Endothelial cell of umbilical vein (primary cell): ENCODE measurements at regions of chr5 and their contacts with region 1.

Region 1: GRCh38 chr5:179806250-179807222 is at the start of gene MGAT4B:
- DNase-seq: peak; percentile 68
- H3K4me3 ChIP-seq: peak within 1 kb of the TSS; percentile 55 to 90 (median 82)
- H3K27ac ChIP-seq: peak within 1 kb of the TSS; percentile 67
- H3K4me1 ChIP-seq: peaks cover 23% of the 10 kb centered on the region
- H3K27me3 ChIP-seq: no peaks in the 10 kb centered on the region
- CTCF ChIP-seq: no peak
- POLR2A ChIP-seq: peak; percentile 70
- total RNA-seq, gene MGAT4B: 226 and 243 TPM in 2 replicates

Region 2: GRCh38 chr5:179795863-179796833 is 10.4 kb before region 1 on chr5:
- CTCF ChIA-PET with region 1: interaction called, 4 read pairs
- POLR2A ChIA-PET with region 1: interaction called, 6 read pairs
- dilution Hi-C with region 1: no loop called
- intact Hi-C with region 1: loop called (anchors 1 kb)
- DNase-seq: peak; percentile 78
- H3K4me3 ChIP-seq: peak overlapping the region; percentile 14 to 57 (median 38)
- H3K27ac ChIP-seq: no peak overlapping the region
- H3K4me1 ChIP-seq: peaks cover 10% of the 10 kb centered on the region
- H3K27me3 ChIP-seq: no peaks in the 10 kb centered on the region
- CTCF ChIP-seq: peak; percentile 70 to 83
- POLR2A ChIP-seq: peak; percentile 61

Region 3: DNA sequence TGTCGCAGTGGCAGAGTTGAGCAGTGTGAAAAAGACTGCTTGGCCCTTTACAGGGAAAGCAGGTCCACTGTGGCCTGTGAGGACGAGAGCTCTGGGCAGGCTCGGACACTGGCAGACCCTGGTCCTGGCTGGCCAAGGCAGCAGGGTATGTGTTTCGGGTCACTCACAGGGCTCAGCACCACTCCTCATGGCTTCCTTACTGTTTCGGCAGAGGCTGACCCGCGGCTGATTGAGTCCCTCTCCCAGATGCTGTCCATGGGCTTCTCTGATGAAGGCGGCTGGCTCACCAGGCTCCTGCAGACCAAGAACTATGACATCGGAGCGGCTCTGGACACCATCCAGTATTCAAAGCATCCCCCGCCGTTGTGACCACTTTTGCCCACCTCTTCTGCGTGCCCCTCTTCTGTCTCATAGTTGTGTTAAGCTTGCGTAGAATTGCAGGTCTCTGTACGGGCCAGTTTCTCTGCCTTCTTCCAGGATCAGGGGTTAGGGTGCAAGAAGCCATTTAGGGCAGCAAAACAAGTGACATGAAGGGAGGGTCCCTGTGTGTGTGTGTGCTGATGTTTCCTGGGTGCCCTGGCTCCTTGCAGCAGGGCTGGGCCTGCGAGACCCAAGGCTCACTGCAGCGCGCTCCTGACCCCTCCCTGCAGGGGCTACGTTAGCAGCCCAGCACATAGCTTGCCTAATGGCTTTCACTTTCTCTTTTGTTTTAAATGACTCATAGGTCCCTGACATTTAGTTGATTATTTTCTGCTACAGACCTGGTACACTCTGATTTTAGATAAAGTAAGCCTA is 29.9 kb after region 1 on chr5:
- CTCF ChIA-PET with region 1: interaction called, 12 read pairs
- POLR2A ChIA-PET with region 1: no interaction called
- dilution Hi-C with region 1: no loop called
- intact Hi-C with region 1: no loop called
- DNase-seq: no peak
- H3K4me3 ChIP-seq: no peak overlapping the region
- H3K27ac ChIP-seq: no peak overlapping the region
- H3K4me1 ChIP-seq: no peaks in the 10 kb centered on the region
- H3K27me3 ChIP-seq: no peaks in the 10 kb centered on the region
- CTCF ChIP-seq: no peak
- POLR2A ChIP-seq: no peak

Region 4: DNA sequence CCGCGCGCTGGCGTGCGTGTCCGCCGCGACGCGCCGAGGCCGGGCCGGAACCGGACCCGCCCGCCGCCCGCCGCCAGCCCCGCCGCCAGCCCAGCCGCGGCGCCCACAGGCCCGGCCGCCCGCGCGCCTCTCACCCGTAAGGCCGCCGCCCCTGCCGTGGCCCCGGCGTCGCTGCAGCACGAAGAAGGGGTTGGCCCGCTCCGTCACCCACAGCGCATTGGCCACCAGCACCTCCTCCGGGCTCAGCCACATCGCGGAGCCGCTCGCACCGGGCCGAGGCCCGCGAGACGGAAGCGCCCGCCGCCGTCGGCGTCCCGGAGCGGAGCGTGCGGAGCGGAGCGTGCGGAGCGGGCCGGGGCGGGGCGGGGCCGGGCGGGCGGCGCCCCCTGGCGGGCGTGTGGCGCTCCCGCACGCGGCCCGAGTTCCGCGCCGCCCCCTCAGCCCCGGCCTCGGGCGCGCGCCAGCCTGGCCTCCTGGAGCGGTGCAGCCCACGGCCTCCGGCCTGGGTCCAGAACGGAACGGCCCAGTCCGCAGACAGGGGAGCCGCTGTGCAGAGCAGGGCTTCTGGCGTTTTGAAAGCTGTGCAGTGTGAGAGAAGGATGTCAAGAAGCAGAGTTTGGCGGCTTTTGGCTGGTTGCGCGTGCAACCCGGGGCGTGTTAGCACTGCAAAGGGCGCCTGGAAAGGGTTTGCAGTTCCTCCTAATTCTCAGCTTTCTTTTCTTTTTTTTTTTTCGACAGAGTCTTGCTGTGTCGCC is 101.2 kb after region 1 on chr5 and contains the start of gene TBC1D9B:
- CTCF ChIA-PET with region 1: interaction called, 4 read pairs
- POLR2A ChIA-PET with region 1: no interaction called
- dilution Hi-C with region 1: no loop called
- intact Hi-C with region 1: loop called (anchors 2 kb)
- DNase-seq: peak; percentile 45
- H3K4me3 ChIP-seq: peak within 1 kb of the TSS; percentile 36 to 51 (median 48)
- H3K27ac ChIP-seq: no peak within 1 kb of the TSS
- H3K4me1 ChIP-seq: peaks cover 29% of the 10 kb centered on the region
- H3K27me3 ChIP-seq: no peaks in the 10 kb centered on the region
- CTCF ChIP-seq: peak; percentile 15 to 23
- POLR2A ChIP-seq: peak; percentile 80
- total RNA-seq, gene TBC1D9B: 120 and 150 TPM in 2 replicates

Region 5: DNA sequence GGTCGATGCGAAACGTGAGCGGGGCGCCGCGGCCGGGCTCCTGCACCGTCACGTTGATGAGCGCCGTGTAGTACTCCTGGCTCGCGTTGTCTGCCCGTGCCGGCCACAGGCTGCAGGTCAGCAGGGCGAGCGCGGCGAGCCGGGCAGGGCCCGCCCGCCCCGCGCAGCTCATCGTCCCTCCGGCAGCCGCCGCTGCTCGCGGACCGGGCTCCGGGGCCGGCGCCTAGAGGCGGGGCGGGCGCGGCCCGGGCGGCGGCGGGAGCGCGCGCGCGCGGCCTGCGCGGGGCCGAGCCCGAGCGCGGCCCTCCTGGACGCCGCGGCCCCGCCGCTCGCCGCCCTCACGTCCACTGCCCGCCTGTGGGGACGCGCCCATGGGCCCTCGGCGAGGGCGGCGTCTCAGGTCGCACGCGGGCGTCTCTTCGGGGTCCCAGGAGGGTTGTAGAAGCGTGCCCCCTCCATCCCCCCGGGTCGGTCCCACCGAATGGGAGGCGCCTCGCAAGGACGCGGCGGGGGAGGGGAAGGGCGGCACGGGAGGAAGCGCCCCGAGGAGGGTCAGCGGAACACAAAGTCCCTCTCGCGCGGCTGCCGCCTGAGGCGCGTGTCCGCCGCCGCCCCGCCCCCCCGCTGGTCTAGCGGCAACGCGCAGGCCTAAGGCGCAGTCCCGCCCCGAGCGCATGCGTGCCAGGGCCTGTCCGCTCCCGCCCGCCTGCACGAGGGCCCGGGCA is 265.2 kb after region 1 on chr5 and contains the start of gene RNF130:
- CTCF ChIA-PET with region 1: interaction called, 3 read pairs
- POLR2A ChIA-PET with region 1: no interaction called
- dilution Hi-C with region 1: no loop called
- intact Hi-C with region 1: loop called (anchors 5 kb)
- DNase-seq: peak; percentile 92
- H3K4me3 ChIP-seq: peak within 1 kb of the TSS; percentile 86 to 89 (median 87)
- H3K27ac ChIP-seq: peak within 1 kb of the TSS; percentile 71
- H3K4me1 ChIP-seq: peaks cover 8% of the 10 kb centered on the region
- H3K27me3 ChIP-seq: peaks cover 0 to 5% of the 10 kb centered on the region in 2 experiments
- CTCF ChIP-seq: no peak
- POLR2A ChIP-seq: peak; percentile 54
- total RNA-seq, gene RNF130: 43.0 and 44.0 TPM in 2 replicates